ENCODE measurements at regions of chr14 and their contacts with region 1.

Region 1: GRCh38 chr14:53055003-53055402 is 98.1 kb downstream of the DDHD1 start:
- DNase-seq: no peak
- H3K4me3 Mint-ChIP-seq: no peak overlapping the region
- H3K27ac Mint-ChIP-seq: no peak overlapping the region
- H3K4me1 Mint-ChIP-seq: peaks cover 13% of the 10 kb centered on the region
- H3K27me3 Mint-ChIP-seq: no peaks in the 10 kb centered on the region

Region 2: GRCh38 chr14:52824507-52824906 is 230.5 kb before region 1 on chr14:
- intact Hi-C with region 1: loop called (anchors 1 kb)
- DNase-seq: no peak
- H3K4me3 Mint-ChIP-seq: no peak overlapping the region
- H3K27ac Mint-ChIP-seq: no peak overlapping the region
- H3K4me1 Mint-ChIP-seq: no peaks in the 10 kb centered on the region
- H3K27me3 Mint-ChIP-seq: peaks cover 14% of the 10 kb centered on the region

Region 3: GRCh38 chr14:52923902-52924575 is 131.0 kb before region 1 on chr14:
- intact Hi-C with region 1: loop called (anchors 2 kb)
- DNase-seq: no peak
- H3K4me3 Mint-ChIP-seq: no peak overlapping the region
- H3K27ac Mint-ChIP-seq: no peak overlapping the region
- H3K4me1 Mint-ChIP-seq: peaks cover 14% of the 10 kb centered on the region
- H3K27me3 Mint-ChIP-seq: peaks cover 2% of the 10 kb centered on the region

Region 4: DNA sequence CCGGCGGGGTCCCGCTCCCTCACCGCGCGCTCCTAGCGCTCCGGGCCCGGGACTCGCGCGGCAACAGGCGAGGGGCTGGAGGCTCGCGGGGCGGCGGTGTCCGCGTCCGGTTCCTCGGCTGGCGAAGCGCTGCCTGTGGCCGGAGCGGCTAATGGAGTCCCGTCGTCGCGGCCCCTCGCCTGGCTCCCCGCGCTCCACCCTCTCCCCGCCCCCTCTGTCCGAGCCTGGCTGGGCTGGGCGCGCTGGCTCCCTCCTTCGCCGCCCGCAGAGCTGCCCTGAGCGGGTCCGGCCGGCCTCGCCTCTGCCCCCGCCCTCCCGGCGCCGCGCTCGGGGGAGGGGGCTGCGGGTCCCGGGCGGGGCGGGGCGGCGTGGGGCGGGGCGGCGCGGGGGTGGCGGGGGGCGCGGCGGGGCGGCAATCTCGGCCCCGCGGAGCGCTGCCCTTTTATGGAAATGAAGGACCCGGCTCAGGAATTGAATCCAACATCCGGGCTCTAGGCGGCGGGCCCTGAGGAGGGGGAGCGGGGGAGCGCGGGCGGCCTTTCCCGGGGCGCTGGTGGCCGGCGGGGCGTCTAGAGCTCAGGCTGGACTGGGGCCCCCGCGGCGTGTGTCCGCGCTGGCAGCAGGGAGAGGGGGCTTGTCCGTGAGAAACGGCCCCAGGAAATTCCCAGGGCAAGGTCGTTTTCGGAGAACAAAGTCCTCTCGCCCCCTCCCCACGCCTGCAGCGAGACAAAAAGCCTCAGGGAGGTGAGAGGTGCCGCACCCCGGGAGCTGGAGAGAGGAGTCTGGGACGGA is 103.9 kb before region 1 on chr14 and contains the start of gene FERMT2:
- intact Hi-C with region 1: no loop called
- DNase-seq: no peak
- H3K4me3 Mint-ChIP-seq: peak within 1 kb of the TSS; percentile 83
- H3K27ac Mint-ChIP-seq: peak within 1 kb of the TSS; percentile 19
- H3K4me1 Mint-ChIP-seq: peaks cover 14% of the 10 kb centered on the region
- H3K27me3 Mint-ChIP-seq: peaks cover 57% of the 10 kb centered on the region
- total RNA-seq, gene FERMT2: 1.3 and 2.1 TPM in 2 replicates

Region 5: GRCh38 chr14:53124786-53125185 is 69.8 kb after region 1 on chr14:
- intact Hi-C with region 1: no loop called
- DNase-seq: no peak
- H3K4me3 Mint-ChIP-seq: no peak overlapping the region
- H3K27ac Mint-ChIP-seq: no peak overlapping the region
- H3K4me1 Mint-ChIP-seq: peaks cover 45% of the 10 kb centered on the region
- H3K27me3 Mint-ChIP-seq: no peaks in the 10 kb centered on the region

Region 6: DNA sequence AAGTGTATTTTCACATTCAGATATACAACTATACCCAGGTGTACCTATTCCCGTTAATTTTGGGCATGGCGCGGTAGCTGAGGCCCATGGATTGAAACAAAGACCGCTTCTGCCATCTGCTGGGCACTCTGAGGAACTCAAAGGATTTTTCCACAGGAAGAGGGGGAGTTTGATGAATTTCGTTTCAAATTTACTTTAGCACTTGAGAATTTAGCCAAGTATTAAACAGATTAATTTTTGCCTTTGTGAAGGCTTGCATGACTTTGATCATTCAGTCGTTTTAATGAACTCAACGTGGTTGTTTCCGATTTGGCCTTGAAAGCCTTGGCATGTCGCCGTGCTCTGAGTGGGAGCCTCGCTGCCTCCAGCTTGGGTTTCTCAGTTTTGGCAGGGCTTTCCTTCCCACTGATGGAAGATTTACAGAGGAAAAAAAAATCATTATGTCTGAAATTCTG is 251.3 kb after region 1 on chr14:
- intact Hi-C with region 1: loop called (anchors 2 kb)
- DNase-seq: peak; percentile 5
- H3K4me3 Mint-ChIP-seq: peak overlapping the region; percentile 76
- H3K27ac Mint-ChIP-seq: no peak overlapping the region
- H3K4me1 Mint-ChIP-seq: peaks cover 11% of the 10 kb centered on the region
- H3K27me3 Mint-ChIP-seq: peaks cover 8% of the 10 kb centered on the region